ENCODE measurements at regions of chr6 and their contacts with region 1.

Region 1: DNA sequence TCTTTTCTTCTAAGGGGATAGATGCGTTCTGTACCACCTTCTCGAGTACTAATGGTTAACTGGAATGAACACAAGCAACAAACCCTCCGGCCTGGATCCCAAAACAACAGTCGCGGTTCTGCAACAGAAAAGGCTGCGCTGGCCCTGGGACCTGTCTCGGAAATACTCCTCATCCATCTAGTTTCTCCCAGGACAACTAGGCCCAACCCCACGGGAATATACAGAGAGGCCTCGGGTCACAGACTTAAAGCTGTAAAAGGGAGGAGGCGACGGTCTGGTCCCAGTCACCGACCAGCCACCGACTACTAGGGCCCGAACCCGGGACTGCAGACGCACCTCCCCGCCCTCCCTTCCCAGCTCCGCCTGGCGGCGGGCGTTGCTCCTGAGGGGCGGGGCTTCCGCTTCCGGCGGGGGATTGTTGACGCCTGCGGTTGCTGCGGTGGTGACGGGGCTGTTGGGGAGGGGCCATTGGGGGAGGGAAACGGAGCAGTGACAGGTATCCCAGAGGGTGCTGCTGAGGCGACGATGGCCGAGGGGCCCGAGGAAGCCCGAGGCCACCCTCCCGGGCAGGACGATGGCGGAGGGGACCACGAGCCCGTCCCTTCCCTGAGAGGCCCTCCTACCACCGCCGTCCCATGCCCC is at the start of gene FAM8A1:
- DNase-seq: peak; percentile 90
- H3K4me3 Mint-ChIP-seq: peak within 1 kb of the TSS; percentile 73
- H3K27ac Mint-ChIP-seq: peak within 1 kb of the TSS; percentile 39
- H3K4me1 Mint-ChIP-seq: peaks cover 27% of the 10 kb centered on the region
- H3K27me3 Mint-ChIP-seq: no peaks in the 10 kb centered on the region
- CTCF ChIP-seq: peak; percentile 37
- total RNA-seq, gene FAM8A1: 12.7 and 14.4 TPM in 2 replicates

Region 2: GRCh38 chr6:17589406-17590096 is 10.5 kb before region 1 on chr6:
- CTCF ChIA-PET with region 1: interaction called, 5 read pairs
- POLR2A ChIA-PET with region 1: interaction called, 21 read pairs
- intact Hi-C with region 1: no loop called
- DNase-seq: peak; percentile 74
- H3K4me3 Mint-ChIP-seq: no peak overlapping the region
- H3K27ac Mint-ChIP-seq: no peak overlapping the region
- H3K4me1 Mint-ChIP-seq: no peaks in the 10 kb centered on the region
- H3K27me3 Mint-ChIP-seq: no peaks in the 10 kb centered on the region
- CTCF ChIP-seq: no peak

Region 3: GRCh38 chr6:17610835-17611234 is 10.8 kb after region 1 on chr6:
- CTCF ChIA-PET with region 1: interaction called, 4 read pairs
- POLR2A ChIA-PET with region 1: interaction called, 15 read pairs
- intact Hi-C with region 1: no loop called
- DNase-seq: no peak
- H3K4me3 Mint-ChIP-seq: no peak overlapping the region
- H3K27ac Mint-ChIP-seq: no peak overlapping the region
- H3K4me1 Mint-ChIP-seq: no peaks in the 10 kb centered on the region
- H3K27me3 Mint-ChIP-seq: no peaks in the 10 kb centered on the region
- CTCF ChIP-seq: no peak

Region 4: GRCh38 chr6:17621003-17621402 is 21.0 kb after region 1 on chr6:
- CTCF ChIA-PET with region 1: interaction called, 8 read pairs
- POLR2A ChIA-PET with region 1: interaction called, 10 read pairs
- intact Hi-C with region 1: no loop called
- DNase-seq: no peak
- H3K4me3 Mint-ChIP-seq: no peak overlapping the region
- H3K27ac Mint-ChIP-seq: no peak overlapping the region
- H3K4me1 Mint-ChIP-seq: no peaks in the 10 kb centered on the region
- H3K27me3 Mint-ChIP-seq: no peaks in the 10 kb centered on the region
- CTCF ChIP-seq: no peak

Region 5: DNA sequence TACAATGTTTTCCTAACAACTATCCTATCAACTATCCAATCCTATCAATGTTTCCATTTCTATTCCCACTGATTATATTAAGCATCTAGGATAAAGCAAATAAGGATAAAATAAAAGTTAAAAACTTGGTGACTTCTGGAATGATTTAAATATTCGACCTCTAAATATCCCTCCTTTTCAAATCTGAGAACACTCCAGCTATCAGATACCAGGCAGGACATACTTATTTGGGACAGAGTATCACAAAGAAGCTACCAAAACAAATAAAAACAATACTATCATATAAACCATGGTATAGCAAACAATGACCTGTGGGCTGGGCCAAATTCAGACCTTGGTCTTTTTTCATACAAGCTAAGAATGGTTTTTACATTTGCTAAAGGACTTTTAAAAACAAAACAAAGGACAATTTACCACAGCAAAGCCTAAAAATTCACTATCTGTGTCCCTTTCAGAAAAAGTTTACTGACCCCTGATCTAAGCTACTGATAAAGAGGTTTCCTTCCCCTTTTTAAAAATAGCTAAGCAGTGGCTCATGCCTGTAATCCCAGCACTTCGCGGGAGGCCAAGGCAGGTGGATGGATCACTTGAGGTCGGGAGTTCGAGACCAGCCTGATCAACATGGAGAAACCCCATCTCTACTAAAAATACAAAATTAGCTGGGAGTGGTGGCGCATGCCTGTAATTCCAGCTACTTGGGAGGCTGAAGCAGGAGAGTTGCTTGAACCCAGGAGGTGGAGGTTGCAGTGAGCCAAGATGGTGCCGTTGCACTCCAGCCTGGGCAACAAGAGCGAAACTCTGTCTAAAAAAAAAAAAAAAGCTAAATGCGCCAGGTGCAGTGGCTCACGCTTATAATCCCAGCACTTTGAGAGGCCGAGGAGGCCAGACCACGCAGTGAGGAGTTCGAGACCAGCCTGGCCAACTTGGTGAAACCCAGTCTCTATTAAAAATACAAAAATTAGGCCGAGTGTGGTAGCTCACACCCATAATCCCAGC is 100.7 kb after region 1 on chr6:
- CTCF ChIA-PET with region 1: no interaction called
- POLR2A ChIA-PET with region 1: interaction called, 29 read pairs
- intact Hi-C with region 1: loop called (anchors 5 kb)
- DNase-seq: no peak
- H3K4me3 Mint-ChIP-seq: no peak overlapping the region
- H3K27ac Mint-ChIP-seq: peak overlapping the region; percentile 74
- H3K4me1 Mint-ChIP-seq: no peaks in the 10 kb centered on the region
- H3K27me3 Mint-ChIP-seq: no peaks in the 10 kb centered on the region
- CTCF ChIP-seq: no peak

Region 6: DNA sequence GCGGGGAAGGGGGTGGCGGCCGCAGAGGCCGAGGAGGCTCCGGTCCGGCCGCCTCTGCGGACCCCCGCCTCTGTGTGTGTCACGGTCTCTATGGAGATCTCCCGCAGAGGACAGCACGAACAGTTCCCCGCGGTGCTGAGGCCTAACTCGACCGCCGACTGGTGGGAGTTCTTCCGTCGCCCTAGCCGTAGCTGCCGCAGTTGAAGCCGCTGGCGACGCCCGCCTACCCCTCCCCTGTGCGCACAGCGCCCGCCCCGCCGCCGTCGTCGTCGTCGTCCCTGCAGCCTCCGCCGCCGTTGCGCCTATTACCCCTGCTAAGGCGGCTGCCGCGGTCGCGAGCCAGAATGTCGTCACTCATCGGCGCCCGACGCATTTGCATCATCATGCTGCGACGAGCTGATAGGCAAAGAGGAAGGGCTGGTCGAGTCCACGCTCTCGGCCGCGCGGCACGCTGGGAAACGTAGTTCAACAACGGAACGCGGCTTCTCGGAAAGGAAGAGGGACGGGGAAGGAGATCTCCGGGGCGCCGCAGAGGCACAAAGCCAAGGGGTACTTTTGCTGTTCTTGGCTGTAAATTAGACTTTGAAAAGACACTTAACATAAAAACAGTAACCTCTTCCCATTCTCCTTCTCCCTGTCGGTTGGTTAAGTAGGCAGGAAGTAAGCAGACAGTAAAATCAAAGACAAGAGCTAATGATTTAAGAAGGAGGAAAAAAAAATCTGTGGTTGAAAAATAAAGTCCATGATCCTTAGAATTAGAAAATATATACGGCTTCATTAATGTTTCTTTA is 106.8 kb after region 1 on chr6 and contains the start of gene NUP153:
- CTCF ChIA-PET with region 1: no interaction called
- POLR2A ChIA-PET with region 1: interaction called, 29 read pairs
- intact Hi-C with region 1: loop called (anchors 5 kb)
- DNase-seq: peak; percentile 98
- H3K4me3 Mint-ChIP-seq: peak within 1 kb of the TSS; percentile 86
- H3K27ac Mint-ChIP-seq: peak within 1 kb of the TSS; percentile 97
- H3K4me1 Mint-ChIP-seq: peaks cover 13% of the 10 kb centered on the region
- H3K27me3 Mint-ChIP-seq: no peaks in the 10 kb centered on the region
- CTCF ChIP-seq: no peak
- total RNA-seq, gene NUP153: 33.3 and 36.5 TPM in 2 replicates

Region 7: DNA sequence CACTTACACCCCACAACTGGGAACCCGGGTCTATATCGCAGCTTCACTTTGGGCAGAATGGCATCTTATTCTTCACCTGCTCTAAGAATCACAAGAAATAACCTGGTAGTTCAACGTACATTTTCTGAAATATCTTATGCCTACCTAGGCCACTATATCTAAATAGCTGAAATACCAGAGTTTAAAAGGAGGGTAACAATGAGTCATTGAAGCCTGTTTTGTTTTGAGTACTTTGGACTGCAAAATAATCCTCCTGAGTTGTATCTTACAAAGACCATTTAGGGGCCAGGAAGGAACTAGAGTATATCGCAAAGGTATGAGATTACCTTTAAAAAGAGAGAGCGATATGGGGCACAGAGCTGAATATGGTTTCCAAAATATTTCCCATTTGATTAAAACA is 203.4 kb after region 1 on chr6:
- CTCF ChIA-PET with region 1: interaction called, 5 read pairs
- POLR2A ChIA-PET with region 1: no interaction called
- intact Hi-C with region 1: loop called (anchors 5 kb)
- DNase-seq: no peak
- H3K4me3 Mint-ChIP-seq: no peak overlapping the region
- H3K27ac Mint-ChIP-seq: no peak overlapping the region
- H3K4me1 Mint-ChIP-seq: peaks cover 6% of the 10 kb centered on the region
- H3K27me3 Mint-ChIP-seq: no peaks in the 10 kb centered on the region
- CTCF ChIP-seq: no peak

Measured in MCF 10A (cell line).